ENCODE measurements at regions of chr3 and their contacts with region 1.

Region 1: DNA sequence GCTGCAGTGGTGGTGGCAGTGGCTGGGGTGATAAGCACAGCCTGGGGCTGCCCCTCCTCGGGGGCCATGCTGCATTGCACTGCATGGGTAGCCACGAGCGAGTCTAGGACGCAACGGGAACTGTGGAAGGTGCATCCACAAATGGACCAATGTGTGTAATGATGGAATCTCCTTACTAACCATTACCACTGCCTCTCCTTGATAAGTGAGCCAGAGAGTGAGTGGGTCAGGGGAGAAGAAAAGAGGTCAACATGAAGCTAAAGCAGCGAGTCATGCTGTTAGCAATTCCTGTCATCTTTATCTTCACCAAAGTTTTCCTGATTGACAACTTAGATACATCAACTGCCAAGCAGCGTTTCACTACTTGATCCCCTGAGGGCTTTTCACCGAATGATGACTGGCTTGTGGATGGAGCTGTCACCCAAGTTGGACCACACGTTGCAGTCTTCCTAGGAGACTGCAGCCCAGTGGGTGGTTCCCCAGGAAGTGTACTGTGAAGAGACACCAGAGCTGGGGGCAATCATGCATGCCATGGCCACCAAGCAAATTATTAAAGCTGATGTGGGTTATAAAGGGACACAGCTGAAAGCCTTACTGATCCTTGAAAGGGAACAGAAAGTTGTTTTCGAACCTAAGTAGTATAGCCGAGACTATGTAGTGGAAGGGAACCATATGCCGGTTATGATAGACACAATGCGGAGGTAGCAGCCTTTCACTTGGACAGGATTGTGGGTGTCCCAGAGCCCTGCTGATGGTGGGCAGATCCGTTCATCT is 20.6 kb downstream of the SAMD7 start:
- DNase-seq: peak; percentile 55
- ATAC-seq: peak; percentile 88
- H3K4me3 Mint-ChIP-seq: peak overlapping the region; percentile 70
- H3K27ac Mint-ChIP-seq: peak overlapping the region; percentile 95
- H3K4me1 Mint-ChIP-seq: peaks cover 52% of the 10 kb centered on the region
- H3K27me3 Mint-ChIP-seq: no peaks in the 10 kb centered on the region
- CTCF ChIP-seq: no peak

Region 2: GRCh38 chr3:169945313-169945712 is 13.4 kb after region 1 on chr3:
- CTCF ChIA-PET with region 1: interaction called, 11 read pairs
- POLR2A ChIA-PET with region 1: interaction called, 189 read pairs
- intact Hi-C with region 1: loop called (anchors 1 kb)
- DNase-seq: peak; percentile 54
- ATAC-seq: peak; percentile 91
- H3K4me3 Mint-ChIP-seq: peak overlapping the region; percentile 68
- H3K27ac Mint-ChIP-seq: peak overlapping the region; percentile 93
- H3K4me1 Mint-ChIP-seq: peaks cover 93% of the 10 kb centered on the region
- H3K27me3 Mint-ChIP-seq: no peaks in the 10 kb centered on the region
- CTCF ChIP-seq: no peak

Region 3: GRCh38 chr3:169954142-169954756 is 22.3 kb after region 1 on chr3:
- CTCF ChIA-PET with region 1: interaction called, 13 read pairs
- POLR2A ChIA-PET with region 1: interaction called, 189 read pairs
- intact Hi-C with region 1: loop called (anchors 1 kb)
- DNase-seq: no peak
- ATAC-seq: peak; percentile 87
- H3K4me3 Mint-ChIP-seq: peak overlapping the region; percentile 69
- H3K27ac Mint-ChIP-seq: peak overlapping the region; percentile 92
- H3K4me1 Mint-ChIP-seq: peaks cover 61% of the 10 kb centered on the region
- H3K27me3 Mint-ChIP-seq: no peaks in the 10 kb centered on the region
- CTCF ChIP-seq: no peak

Region 4: GRCh38 chr3:169966428-169966950 is 34.6 kb after region 1 on chr3 and contains the start of gene SEC62:
- CTCF ChIA-PET with region 1: interaction called, 127 read pairs
- POLR2A ChIA-PET with region 1: interaction called, 267 read pairs
- intact Hi-C with region 1: loop called (anchors 1 kb)
- DNase-seq: peak; percentile 94
- ATAC-seq: peak; percentile 86
- H3K4me3 Mint-ChIP-seq: peak within 1 kb of the TSS; percentile 99
- H3K27ac Mint-ChIP-seq: peak within 1 kb of the TSS; percentile 99
- H3K4me1 Mint-ChIP-seq: peaks cover 87% of the 10 kb centered on the region
- H3K27me3 Mint-ChIP-seq: no peaks in the 10 kb centered on the region
- CTCF ChIP-seq: no peak
- total RNA-seq, gene SEC62: 140 and 165 TPM in 2 replicates

Region 5: GRCh38 chr3:169980055-169980454 is 48.1 kb after region 1 on chr3:
- CTCF ChIA-PET with region 1: interaction called, 30 read pairs
- POLR2A ChIA-PET with region 1: interaction called, 11 read pairs
- intact Hi-C with region 1: no loop called
- DNase-seq: no peak
- ATAC-seq: no peak
- H3K4me3 Mint-ChIP-seq: no peak overlapping the region
- H3K27ac Mint-ChIP-seq: peak overlapping the region; percentile 10
- H3K4me1 Mint-ChIP-seq: peaks cover 51% of the 10 kb centered on the region
- H3K27me3 Mint-ChIP-seq: no peaks in the 10 kb centered on the region
- CTCF ChIP-seq: no peak

Region 6: DNA sequence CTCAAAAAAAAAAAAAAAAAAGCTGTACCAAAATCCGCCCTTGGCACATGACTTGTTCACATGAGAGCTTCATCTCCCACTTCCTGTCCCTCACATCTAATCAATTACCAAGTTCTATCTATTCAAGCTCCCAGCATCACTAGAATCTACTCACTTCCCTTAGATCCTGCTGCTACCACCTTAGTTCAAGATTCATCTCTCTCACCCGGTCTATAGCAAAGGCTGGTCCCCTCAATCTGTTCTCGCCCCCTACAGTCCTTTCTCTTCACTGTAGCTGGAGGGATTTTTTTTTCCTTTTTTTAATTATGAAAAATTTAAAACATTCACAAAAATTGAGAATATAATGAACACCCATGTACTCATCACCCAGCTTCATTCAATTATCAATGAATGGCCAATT is 89.1 kb after region 1 on chr3:
- CTCF ChIA-PET with region 1: interaction called, 13 read pairs
- POLR2A ChIA-PET with region 1: interaction called, 5 read pairs
- intact Hi-C with region 1: no loop called
- DNase-seq: no peak
- ATAC-seq: peak; percentile 70
- H3K4me3 Mint-ChIP-seq: no peak overlapping the region
- H3K27ac Mint-ChIP-seq: no peak overlapping the region
- H3K4me1 Mint-ChIP-seq: peaks cover 5% of the 10 kb centered on the region
- H3K27me3 Mint-ChIP-seq: peaks cover 4% of the 10 kb centered on the region
- CTCF ChIP-seq: no peak

Region 7: GRCh38 chr3:170037463-170038433 is 105.8 kb after region 1 on chr3 and contains the start of gene GPR160:
- CTCF ChIA-PET with region 1: interaction called, 4 read pairs
- POLR2A ChIA-PET with region 1: interaction called, 4 read pairs
- intact Hi-C with region 1: loop called (anchors 2 kb)
- DNase-seq: peak; percentile 88
- ATAC-seq: peak; percentile 77
- H3K4me3 Mint-ChIP-seq: peak within 1 kb of the TSS; percentile 93
- H3K27ac Mint-ChIP-seq: peak within 1 kb of the TSS; percentile 88
- H3K4me1 Mint-ChIP-seq: peaks cover 46% of the 10 kb centered on the region
- H3K27me3 Mint-ChIP-seq: no peaks in the 10 kb centered on the region
- CTCF ChIP-seq: peak; percentile 52
- total RNA-seq, gene GPR160: 63.2 and 65.5 TPM in 2 replicates

Measured in activated B cell treated with CpG ODN at 0.5 μM for 24 hours (primary cell).